ENCODE measurements at regions of chr17 and their contacts with region 1.

Region 1: GRCh38 chr17:27293898-27294688 is at the start of gene WSB1:
- DNase-seq: peak; percentile 94 to 98 (median 98)
- ATAC-seq: peak; percentile 88
- H3K4me3 ChIP-seq: peak within 1 kb of the TSS; percentile 93
- H3K27ac ChIP-seq: peak within 1 kb of the TSS; percentile 92
- H3K4me1 ChIP-seq: peaks cover 17 to 25% of the 10 kb centered on the region in 2 experiments
- H3K27me3 ChIP-seq: no peaks in the 10 kb centered on the region
- CTCF ChIP-seq: 0 out of 6 replicates have a peak, but pooled peaks of 1 of the 3 experiments have one; percentile 0
- EP300 ChIP-seq: 0 out of 2 replicates have a peak, but pooled peaks have one; percentile 49
- POLR2A ChIP-seq: peak; percentile 99
- RAD21 ChIP-seq: no peak; a peak in 1 of 4 replicates
- polyA plus RNA-seq, gene WSB1: 22.8 to 29.8 TPM

Region 2: GRCh38 chr17:27245230-27245696 is 48.8 kb before region 1 on chr17:
- CTCF ChIA-PET with region 1: no interaction called
- POLR2A ChIA-PET with region 1: interaction called, 6 read pairs
- in situ Hi-C with region 1: no loop called
- intact Hi-C with region 1: loop called (anchors 1 kb)
- DNase-seq: peak; percentile 84 to 90 (median 88)
- ATAC-seq: peak; percentile 100
- H3K4me3 ChIP-seq: no peak overlapping the region
- H3K27ac ChIP-seq: no peak overlapping the region
- H3K4me1 ChIP-seq: peaks cover 7 to 13% of the 10 kb centered on the region in 2 experiments; a peak in 4 of 5 replicates
- H3K27me3 ChIP-seq: no peaks in the 10 kb centered on the region; a peak in 1 of 5 replicates
- CTCF ChIP-seq: peak; percentile 95 to 97 (median 96)
- EP300 ChIP-seq: no peak
- POLR2A ChIP-seq: no peak
- RAD21 ChIP-seq: peak; percentile 98 to 99

Region 3: DNA sequence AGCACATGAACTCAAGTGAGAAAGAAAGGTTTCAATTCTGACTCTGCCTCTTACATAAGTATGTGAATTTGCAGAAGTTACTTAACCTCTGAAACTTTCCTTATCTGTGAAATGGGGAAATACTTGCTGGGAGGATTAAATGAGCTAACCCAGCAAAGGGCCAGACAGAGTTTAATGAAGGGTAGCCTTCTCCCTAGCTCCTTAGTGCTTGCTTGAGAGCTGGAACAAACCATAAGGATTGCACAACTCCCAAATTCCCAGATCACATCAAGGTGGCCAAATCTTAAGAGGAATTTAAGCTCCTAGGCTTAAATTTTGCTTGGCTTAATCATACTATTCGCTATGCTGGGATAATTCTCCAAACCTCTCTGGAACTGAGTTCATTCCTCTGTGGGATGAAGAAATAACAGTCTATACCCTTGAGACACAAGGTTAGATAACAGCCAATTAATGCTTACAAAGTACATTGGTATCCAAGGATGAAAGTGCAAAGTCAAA is 12.0 kb before region 1 on chr17:
- CTCF ChIA-PET with region 1: no interaction called
- POLR2A ChIA-PET with region 1: interaction called, 23 read pairs
- in situ Hi-C with region 1: no loop called
- intact Hi-C with region 1: no loop called
- DNase-seq: no peak
- ATAC-seq: no peak
- H3K4me3 ChIP-seq: no peak overlapping the region
- H3K27ac ChIP-seq: no peak overlapping the region
- H3K4me1 ChIP-seq: peaks cover 5% of the 10 kb centered on the region in 2 experiments; a peak in 2 of 5 replicates
- H3K27me3 ChIP-seq: no peaks in the 10 kb centered on the region
- CTCF ChIP-seq: no peak
- EP300 ChIP-seq: no peak
- POLR2A ChIP-seq: no peak
- RAD21 ChIP-seq: no peak

Region 4: GRCh38 chr17:27315322-27315721 is 21.2 kb after region 1 on chr17:
- CTCF ChIA-PET with region 1: no interaction called
- POLR2A ChIA-PET with region 1: interaction called, 37 read pairs
- in situ Hi-C with region 1: no loop called
- intact Hi-C with region 1: no loop called
- DNase-seq: peak in 1 of 4 experiments; percentile 21
- ATAC-seq: peak; percentile 20; the same call in 2 of the 3 replicates
- H3K4me3 ChIP-seq: no peak overlapping the region
- H3K27ac ChIP-seq: no peak overlapping the region
- H3K4me1 ChIP-seq: peaks cover 0 to 3% of the 10 kb centered on the region in 2 experiments; a peak in 3 of 5 replicates
- H3K27me3 ChIP-seq: no peaks in the 10 kb centered on the region
- CTCF ChIP-seq: no peak
- EP300 ChIP-seq: no peak
- POLR2A ChIP-seq: no peak
- RAD21 ChIP-seq: no peak

Region 5: GRCh38 chr17:27332485-27333409 is 38.7 kb after region 1 on chr17:
- CTCF ChIA-PET with region 1: no interaction called
- POLR2A ChIA-PET with region 1: interaction called, 19 read pairs
- in situ Hi-C with region 1: no loop called
- intact Hi-C with region 1: no loop called
- DNase-seq: peak; percentile 92 to 99 (median 94)
- ATAC-seq: peak; percentile 97
- H3K4me3 ChIP-seq: peak overlapping the region; percentile 39
- H3K27ac ChIP-seq: peak overlapping the region; percentile 88
- H3K4me1 ChIP-seq: peaks cover 22 to 31% of the 10 kb centered on the region in 2 experiments; a peak in 4 of 5 replicates
- H3K27me3 ChIP-seq: no peaks in the 10 kb centered on the region
- CTCF ChIP-seq: peak; percentile 90 to 96 (median 95)
- EP300 ChIP-seq: peak; percentile 28; the same call in 1 of the 2 replicates
- POLR2A ChIP-seq: peak; percentile 72
- RAD21 ChIP-seq: peak; percentile 98 to 99

Region 6: GRCh38 chr17:27345141-27345904 is 51.2 kb after region 1 on chr17:
- CTCF ChIA-PET with region 1: no interaction called
- POLR2A ChIA-PET with region 1: interaction called, 13 read pairs
- in situ Hi-C with region 1: no loop called
- intact Hi-C with region 1: no loop called
- DNase-seq: peak; percentile 61 to 95 (median 76)
- ATAC-seq: peak; percentile 93
- H3K4me3 ChIP-seq: peak overlapping the region; percentile 40
- H3K27ac ChIP-seq: peak overlapping the region; percentile 95
- H3K4me1 ChIP-seq: peaks cover 25 to 48% of the 10 kb centered on the region in 2 experiments
- H3K27me3 ChIP-seq: no peaks in the 10 kb centered on the region
- CTCF ChIP-seq: no peak
- EP300 ChIP-seq: no peak; the same call in 1 of the 2 replicates
- POLR2A ChIP-seq: peak; percentile 92
- RAD21 ChIP-seq: no peak

Measured in K562 (cell line).